ENCODE measurements at regions of chr2 and their contacts with region 1.

Region 1: DNA sequence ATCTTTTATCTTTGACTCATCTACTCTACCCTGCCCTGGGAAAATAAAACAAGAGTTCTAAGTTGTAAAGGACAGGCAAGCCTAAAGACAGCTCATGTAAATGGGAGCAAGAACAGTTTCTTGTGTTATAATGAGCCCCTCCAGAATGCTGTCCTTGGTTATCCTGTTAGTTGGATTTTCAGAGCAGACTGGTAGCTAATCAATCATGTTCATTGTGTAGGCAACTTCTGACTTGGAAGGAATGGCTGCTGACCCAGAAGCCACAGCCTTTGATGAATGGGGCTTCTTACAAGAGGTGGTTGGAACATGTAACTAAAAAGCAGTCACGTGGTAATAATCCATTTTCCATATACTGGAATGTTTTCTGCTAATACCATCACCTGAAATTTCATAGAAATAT is 254.2 kb downstream of the AGPS start:
- DNase-seq: no peak
- H3K4me3 ChIP-seq: no peak overlapping the region
- H3K27ac ChIP-seq: no peak overlapping the region
- H3K4me1 ChIP-seq: no peaks in the 10 kb centered on the region
- H3K27me3 ChIP-seq: no peaks in the 10 kb centered on the region
- CTCF ChIP-seq: no peak
- POLR2A ChIP-seq: no peak

Region 2: GRCh38 chr2:177679611-177680605 is 33.1 kb after region 1 on chr2:
- intact Hi-C with region 1: loop called (anchors 1 kb)
- DNase-seq: no peak
- H3K4me3 ChIP-seq: no peak overlapping the region
- H3K27ac ChIP-seq: no peak overlapping the region
- H3K4me1 ChIP-seq: no peaks in the 10 kb centered on the region
- H3K27me3 ChIP-seq: no peaks in the 10 kb centered on the region
- CTCF ChIP-seq: no peak
- POLR2A ChIP-seq: no peak

Measured in breast epithelium (tissue), 4 donors.